Esophagus muscularis mucosa (tissue), 4 donors: ENCODE measurements at regions of chr3 and their contacts with region 1.

Region 1: DNA sequence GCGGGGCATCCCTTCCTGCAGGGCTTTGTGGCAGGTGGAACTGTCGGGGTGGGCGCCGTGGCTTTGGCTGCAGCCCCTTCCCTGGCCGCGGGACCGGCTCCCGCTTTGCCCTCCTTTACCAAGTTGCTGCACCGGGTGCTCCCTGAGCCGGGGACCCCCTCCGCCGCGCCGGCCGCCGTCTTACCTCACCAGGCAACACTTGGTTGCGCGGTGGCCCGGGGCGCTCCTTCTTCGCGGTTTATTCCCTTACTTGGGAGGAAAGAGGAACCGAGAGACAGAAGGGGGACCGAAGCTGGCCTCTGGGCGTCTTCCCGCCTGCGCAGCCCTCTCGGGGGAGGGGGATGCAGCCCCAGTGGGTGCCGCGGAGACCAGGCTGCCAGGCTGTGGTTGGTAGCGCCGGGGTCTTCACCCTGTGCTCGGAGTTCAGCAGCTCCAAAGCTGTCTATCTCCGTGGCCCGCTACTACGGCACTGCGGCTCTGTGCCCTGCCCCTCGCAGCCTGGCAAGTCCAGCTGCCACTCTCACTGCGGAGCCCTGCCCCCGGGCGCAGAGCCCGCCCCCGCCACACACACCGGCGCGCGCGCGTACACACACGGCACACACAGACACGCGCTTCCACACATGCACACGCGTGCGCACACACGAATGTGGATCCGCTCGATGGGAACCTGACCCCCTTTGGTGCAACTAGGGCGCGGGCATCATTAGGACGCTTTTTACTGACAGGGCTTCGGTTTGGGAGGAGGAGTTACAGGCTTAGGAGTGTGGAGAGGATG is at the start of gene DGKG:
- DNase-seq: no peak
- H3K4me3 ChIP-seq: peak within 1 kb of the TSS; percentile 75 to 89 (median 80)
- H3K27ac ChIP-seq: peak within 1 kb of the TSS; percentile 89 to 95 (median 92)
- H3K4me1 ChIP-seq: peaks cover 37 to 82% (median 79%) of the 10 kb centered on the region in 4 donors
- H3K27me3 ChIP-seq: peaks cover 0 to 18% (median 0%) of the 10 kb centered on the region in 4 donors
- CTCF ChIP-seq: no peak
- EP300 ChIP-seq: no peak
- POLR2A ChIP-seq: peak; percentile 68
- total RNA-seq, gene DGKG: 75.0 to 169 (median 104) TPM

Region 2: GRCh38 chr3:186259612-186260383 is 102.2 kb before region 1 on chr3:
- intact Hi-C with region 1: loop called (anchors 5 kb)
- DNase-seq: no peak
- H3K4me3 ChIP-seq: no peak overlapping the region
- H3K27ac ChIP-seq: peak overlapping the region; percentile 71 to 88 (median 79)
- H3K4me1 ChIP-seq: peaks cover 3 to 80% (median 61%) of the 10 kb centered on the region in 4 donors
- H3K27me3 ChIP-seq: no peaks in the 10 kb centered on the region
- CTCF ChIP-seq: peak; percentile 82 to 98 (median 84)
- EP300 ChIP-seq: no peak
- POLR2A ChIP-seq: no peak

Region 3: GRCh38 chr3:186281176-186281575 is 80.8 kb before region 1 on chr3:
- intact Hi-C with region 1: loop called (anchors 5 kb)
- DNase-seq: no peak
- H3K4me3 ChIP-seq: no peak overlapping the region
- H3K27ac ChIP-seq: peak overlapping the region; percentile 58 to 72 (median 65)
- H3K4me1 ChIP-seq: peaks cover 3 to 47% (median 37%) of the 10 kb centered on the region in 4 donors
- H3K27me3 ChIP-seq: no peaks in the 10 kb centered on the region
- CTCF ChIP-seq: no peak
- EP300 ChIP-seq: no peak
- POLR2A ChIP-seq: no peak

Region 4: DNA sequence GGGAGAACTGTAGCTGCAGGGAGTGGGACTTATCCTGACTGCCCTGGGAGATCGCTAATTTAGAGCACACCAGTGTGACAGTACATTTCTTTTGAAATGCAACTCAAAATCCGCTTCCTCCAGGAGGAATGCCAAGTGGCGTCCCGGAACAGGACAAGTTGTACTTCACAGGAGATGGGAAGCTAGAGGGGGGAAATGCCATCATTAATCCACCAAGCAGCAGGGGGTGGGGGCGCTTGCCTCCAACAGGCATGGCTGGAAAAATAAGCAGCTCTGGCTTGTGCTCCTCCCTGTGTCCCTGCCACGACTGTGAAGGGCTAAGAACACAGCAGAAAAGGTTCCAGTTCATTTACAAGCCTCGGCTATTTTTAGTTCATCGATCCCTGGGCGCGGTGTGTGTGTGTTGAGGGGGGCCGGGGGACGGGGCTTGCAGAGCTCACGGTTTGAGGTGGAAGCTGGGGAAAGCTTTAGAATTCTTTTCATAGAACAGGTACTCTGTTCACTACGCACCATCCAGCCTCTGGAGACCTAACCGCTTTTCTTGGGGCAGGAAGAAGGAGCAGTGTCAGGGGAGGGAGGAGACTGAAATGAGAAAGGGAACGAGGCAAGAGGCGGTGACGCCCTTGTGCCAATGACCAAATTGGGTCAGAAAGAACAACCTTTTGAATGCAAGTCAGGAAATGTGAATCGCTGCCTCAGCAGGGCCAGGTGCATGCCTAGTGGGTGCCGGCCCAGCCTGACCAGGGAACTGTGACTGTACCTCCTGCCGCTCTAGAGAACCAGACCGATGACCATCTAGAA is 51.9 kb after region 1 on chr3:
- intact Hi-C with region 1: loop called (anchors 5 kb)
- DNase-seq: peak; percentile 93
- H3K4me3 ChIP-seq: peak overlapping the region; percentile 43 to 57 (median 46)
- H3K27ac ChIP-seq: peak overlapping the region; percentile 90 to 97 (median 92)
- H3K4me1 ChIP-seq: peaks cover 16 to 74% (median 60%) of the 10 kb centered on the region in 4 donors
- H3K27me3 ChIP-seq: no peaks in the 10 kb centered on the region
- CTCF ChIP-seq: no peak
- EP300 ChIP-seq: peak; percentile 92
- POLR2A ChIP-seq: no peak

Region 5: DNA sequence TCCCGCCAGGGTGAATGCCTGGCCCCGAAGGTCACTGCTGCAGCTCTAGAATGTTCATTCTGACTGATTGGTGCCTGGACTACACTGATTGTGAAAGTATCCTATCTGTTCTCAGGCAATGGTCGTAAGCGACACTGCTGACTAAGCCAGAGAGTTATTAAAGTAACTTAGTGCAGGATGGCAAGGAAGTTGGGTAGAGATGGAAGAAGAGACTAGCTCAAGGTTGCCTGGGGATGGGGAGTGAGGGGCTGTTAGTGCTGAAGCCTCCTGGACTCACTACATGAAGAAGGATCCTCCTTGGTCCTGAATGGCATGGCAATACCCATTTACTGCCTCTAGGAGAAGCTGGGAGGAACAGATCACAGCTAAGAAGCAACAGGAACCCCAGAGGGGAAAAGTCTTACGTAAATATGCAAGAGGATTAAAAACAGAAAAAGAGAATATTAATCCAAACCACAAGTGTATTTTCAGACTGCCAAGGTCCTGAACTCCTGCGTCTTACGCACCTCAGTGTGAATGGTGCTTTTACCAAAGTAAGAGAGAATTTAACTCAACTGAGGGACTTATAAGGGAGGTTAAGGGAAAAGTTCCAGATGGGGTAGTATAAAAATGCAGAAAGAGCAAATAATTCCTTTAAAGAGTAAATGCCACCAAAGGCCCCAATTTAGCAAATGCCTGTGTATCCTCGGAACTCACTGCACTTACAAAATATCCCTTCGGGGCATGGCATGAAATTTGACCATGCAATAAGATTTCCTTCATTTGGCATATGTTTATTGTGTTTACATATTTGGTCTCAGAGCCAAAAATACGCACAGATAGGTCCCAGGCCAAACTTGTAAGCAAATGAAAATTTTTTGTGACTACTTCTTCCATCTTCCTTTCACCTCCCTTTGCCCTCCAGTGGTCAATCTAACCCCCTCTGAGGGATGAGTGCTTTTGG is 64.1 kb after region 1 on chr3:
- intact Hi-C with region 1: loop called (anchors 5 kb)
- DNase-seq: peak; percentile 83
- H3K4me3 ChIP-seq: no peak overlapping the region
- H3K27ac ChIP-seq: peak overlapping the region; percentile 71 to 83 (median 78)
- H3K4me1 ChIP-seq: peaks cover 22 to 55% (median 53%) of the 10 kb centered on the region in 4 donors
- H3K27me3 ChIP-seq: no peaks in the 10 kb centered on the region
- CTCF ChIP-seq: peak; percentile 19 to 51 (median 28)
- EP300 ChIP-seq: no peak
- POLR2A ChIP-seq: no peak